ENCODE measurements at regions of chr2 and their contacts with region 1.

Region 1: DNA sequence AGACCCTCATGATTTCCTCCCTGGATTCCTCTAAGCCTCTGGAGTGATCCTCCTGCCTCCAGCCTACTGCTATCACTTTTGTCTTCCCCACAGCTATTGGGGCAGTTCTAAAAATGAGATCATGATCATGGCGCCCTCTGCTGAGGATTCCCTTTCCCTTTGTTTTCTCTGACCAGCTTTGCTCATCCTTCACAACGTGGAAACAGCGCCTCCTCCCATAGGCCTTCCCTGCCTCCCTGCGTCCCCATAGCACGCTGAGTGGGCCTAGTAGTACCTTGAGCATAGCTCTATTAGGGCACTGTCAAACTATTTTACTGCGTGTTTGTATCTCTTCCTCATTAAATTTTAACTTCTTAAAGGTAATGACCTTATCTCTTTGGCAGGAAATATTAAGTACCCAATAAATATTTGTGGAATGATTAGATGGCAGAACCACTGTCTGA is 207.0 kb upstream of the FANCL start:
- DNase-seq: peak; percentile 53 to 90
- ATAC-seq: peak; percentile 100
- H3K4me3 ChIP-seq: no peak overlapping the region
- H3K27ac ChIP-seq: peak overlapping the region in 1 of 2 experiments; percentile 27; a peak in 1 of 6 replicates
- H3K4me1 ChIP-seq: peaks cover 8% of the 10 kb centered on the region; the same call in 2 of the 3 replicates
- CTCF ChIP-seq: peak; percentile 97
- EP300 ChIP-seq: no peak
- POLR2A ChIP-seq: no peak
- RAD21 ChIP-seq: peak; percentile 93 to 95

Region 2: GRCh38 chr2:57720728-57721627 is 727.1 kb before region 1 on chr2:
- CTCF ChIA-PET with region 1: interaction called, 16 read pairs
- POLR2A ChIA-PET with region 1: no interaction called
- DNase-seq: peak; percentile 38 to 76
- ATAC-seq: peak; percentile 99 to 100
- H3K4me3 ChIP-seq: no peak overlapping the region
- H3K27ac ChIP-seq: peak overlapping the region; percentile 42 to 65; a peak in 4 of 6 replicates
- H3K4me1 ChIP-seq: no peaks in the 10 kb centered on the region
- CTCF ChIP-seq: peak; percentile 98
- EP300 ChIP-seq: no peak
- POLR2A ChIP-seq: no peak
- RAD21 ChIP-seq: peak; percentile 98

Region 3: DNA sequence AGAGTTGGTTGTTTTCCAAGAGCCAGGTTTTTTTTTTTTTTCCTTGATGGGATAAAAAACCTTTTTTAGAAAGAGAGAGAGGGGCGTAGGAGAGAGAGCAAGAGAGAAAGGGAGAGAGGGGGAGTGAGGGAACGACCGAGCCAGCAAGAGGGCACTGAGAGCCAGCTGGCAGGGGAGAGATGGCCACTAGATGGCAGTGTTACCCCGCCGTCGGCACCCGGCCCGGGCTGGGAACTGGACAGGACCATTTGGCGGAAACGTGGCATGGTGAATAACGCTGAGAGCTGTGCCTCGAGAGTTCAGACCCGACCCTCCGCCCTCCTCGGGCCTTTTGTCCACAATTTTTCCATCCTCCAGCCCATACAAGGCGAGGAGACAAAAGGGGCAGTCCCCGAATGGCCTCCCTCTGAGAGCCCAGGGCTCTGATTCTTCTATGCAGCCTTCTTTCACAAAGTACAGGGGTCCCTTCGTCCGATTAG is 688.2 kb before region 1 on chr2:
- CTCF ChIA-PET with region 1: interaction called, 25 read pairs
- POLR2A ChIA-PET with region 1: no interaction called
- DNase-seq: peak; percentile 71 to 86
- ATAC-seq: peak; percentile 99 to 100
- H3K4me3 ChIP-seq: peak overlapping the region; percentile 25
- H3K27ac ChIP-seq: peak overlapping the region; percentile 67 to 86
- H3K4me1 ChIP-seq: peaks cover 12% of the 10 kb centered on the region; the same call in 2 of the 3 replicates
- CTCF ChIP-seq: peak; percentile 98
- EP300 ChIP-seq: no peak
- POLR2A ChIP-seq: no peak
- RAD21 ChIP-seq: peak; percentile 99 to 100

Region 4: GRCh38 chr2:57906152-57906732 is 541.8 kb before region 1 on chr2:
- CTCF ChIA-PET with region 1: interaction called, 24 read pairs
- POLR2A ChIA-PET with region 1: no interaction called
- DNase-seq: peak; percentile 77 to 81
- ATAC-seq: peak; percentile 99 to 100
- H3K4me3 ChIP-seq: no peak overlapping the region
- H3K27ac ChIP-seq: peak overlapping the region; percentile 20 to 22; a peak in 3 of 6 replicates
- H3K4me1 ChIP-seq: peaks cover 4% of the 10 kb centered on the region
- CTCF ChIP-seq: peak; percentile 97
- EP300 ChIP-seq: no peak
- POLR2A ChIP-seq: no peak
- RAD21 ChIP-seq: peak; percentile 99

Region 5: DNA sequence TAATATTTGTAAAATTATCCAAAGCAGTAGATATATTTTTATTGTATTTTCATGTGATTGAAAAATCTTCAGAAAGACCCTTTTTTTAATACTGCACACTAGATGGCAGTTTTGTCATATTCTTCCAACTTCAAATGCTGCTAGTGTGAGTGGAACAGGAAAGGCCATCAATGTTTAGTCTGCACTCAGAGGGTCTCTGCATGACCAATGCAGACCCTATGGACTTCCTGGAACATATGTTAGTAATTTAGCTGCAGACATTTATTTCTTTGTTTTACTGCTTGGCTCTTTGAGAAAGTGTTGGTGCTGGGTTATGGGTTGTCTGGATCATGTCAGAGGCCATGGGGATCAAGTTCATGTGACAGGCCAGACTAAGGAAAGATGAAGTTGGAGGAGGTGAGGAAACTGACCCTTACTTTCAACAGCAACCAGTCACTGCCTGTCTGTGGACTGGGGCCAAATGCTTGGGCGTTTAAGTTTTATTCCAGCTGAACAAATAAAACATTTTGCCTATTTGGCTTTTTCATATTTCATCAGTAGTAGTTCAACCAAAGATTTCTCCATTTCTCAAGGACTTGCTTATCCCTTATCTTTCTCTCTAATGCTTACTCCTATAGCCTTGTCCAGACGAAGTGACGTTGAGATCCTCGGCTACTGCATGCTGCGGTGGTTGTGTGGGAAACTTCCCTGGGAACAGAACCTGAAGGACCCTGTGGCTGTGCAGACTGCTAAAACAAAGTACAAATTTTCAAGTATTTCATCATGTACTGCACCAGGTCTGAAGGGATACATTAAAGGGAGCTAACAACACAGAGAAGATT is 316.7 kb before region 1 on chr2:
- CTCF ChIA-PET with region 1: interaction called, 12 read pairs
- POLR2A ChIA-PET with region 1: no interaction called
- DNase-seq: no peak
- ATAC-seq: peak; percentile 69 to 70; a peak in 5 of 6 replicates
- H3K4me3 ChIP-seq: no peak overlapping the region
- H3K27ac ChIP-seq: peak overlapping the region in 1 of 2 experiments; percentile 22; a peak in 2 of 6 replicates
- H3K4me1 ChIP-seq: peaks cover 18% of the 10 kb centered on the region; the same call in 2 of the 3 replicates
- CTCF ChIP-seq: peak; percentile 67
- EP300 ChIP-seq: no peak
- POLR2A ChIP-seq: no peak
- RAD21 ChIP-seq: peak; percentile 74 to 78

Region 6: GRCh38 chr2:58436872-58437271 is 11.2 kb before region 1 on chr2:
- CTCF ChIA-PET with region 1: interaction called, 14 read pairs
- POLR2A ChIA-PET with region 1: no interaction called
- DNase-seq: no peak
- ATAC-seq: 0 out of 6 replicates have a peak, but pooled peaks of 1 of the 2 experiments have one; percentile 19
- H3K4me3 ChIP-seq: no peak overlapping the region
- H3K27ac ChIP-seq: no peak overlapping the region
- H3K4me1 ChIP-seq: no peaks in the 10 kb centered on the region
- CTCF ChIP-seq: no peak
- EP300 ChIP-seq: no peak
- POLR2A ChIP-seq: no peak
- RAD21 ChIP-seq: no peak

Region 7: GRCh38 chr2:58460670-58461069 is 12.6 kb after region 1 on chr2:
- CTCF ChIA-PET with region 1: interaction called, 22 read pairs
- POLR2A ChIA-PET with region 1: no interaction called
- DNase-seq: no peak
- ATAC-seq: no peak
- H3K4me3 ChIP-seq: no peak overlapping the region
- H3K27ac ChIP-seq: no peak overlapping the region
- H3K4me1 ChIP-seq: no peaks in the 10 kb centered on the region
- CTCF ChIP-seq: no peak
- EP300 ChIP-seq: no peak
- POLR2A ChIP-seq: no peak
- RAD21 ChIP-seq: no peak

Measured in A549 (cell line).